AG04449 (cell line): ENCODE measurements at regions of chr1 and their contacts with region 1.

Region 1: GRCh38 chr1:176559878-176560277 is 96.9 kb downstream of the PAPPA2 start:
- DNase-seq: no peak
- H3K4me3 ChIP-seq: no peak overlapping the region
- CTCF ChIP-seq: peak; percentile 72

Region 2: DNA sequence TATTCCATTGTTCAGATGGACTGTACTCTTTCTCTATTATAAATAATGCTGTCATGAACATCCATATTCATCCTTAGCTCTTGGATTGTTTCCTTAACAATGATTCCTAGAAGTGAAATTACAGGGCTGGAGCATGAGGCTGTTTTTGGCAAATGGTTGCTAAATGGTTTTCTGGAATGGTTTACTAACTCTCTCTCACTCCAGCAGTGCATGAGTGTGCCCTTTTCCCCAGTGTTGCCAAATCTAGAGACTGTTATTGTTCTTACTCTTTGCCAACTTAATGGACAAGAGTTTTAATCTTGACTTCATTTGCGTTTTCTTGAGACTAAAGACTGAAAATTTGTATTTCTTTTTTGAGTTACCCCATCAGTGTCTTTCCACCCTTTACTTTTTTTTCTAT is 16.1 kb after region 1 on chr1:
- CTCF ChIA-PET with region 1: interaction called, 12 read pairs
- POLR2A ChIA-PET with region 1: no interaction called
- DNase-seq: no peak
- H3K4me3 ChIP-seq: no peak overlapping the region
- CTCF ChIP-seq: no peak

Region 3: DNA sequence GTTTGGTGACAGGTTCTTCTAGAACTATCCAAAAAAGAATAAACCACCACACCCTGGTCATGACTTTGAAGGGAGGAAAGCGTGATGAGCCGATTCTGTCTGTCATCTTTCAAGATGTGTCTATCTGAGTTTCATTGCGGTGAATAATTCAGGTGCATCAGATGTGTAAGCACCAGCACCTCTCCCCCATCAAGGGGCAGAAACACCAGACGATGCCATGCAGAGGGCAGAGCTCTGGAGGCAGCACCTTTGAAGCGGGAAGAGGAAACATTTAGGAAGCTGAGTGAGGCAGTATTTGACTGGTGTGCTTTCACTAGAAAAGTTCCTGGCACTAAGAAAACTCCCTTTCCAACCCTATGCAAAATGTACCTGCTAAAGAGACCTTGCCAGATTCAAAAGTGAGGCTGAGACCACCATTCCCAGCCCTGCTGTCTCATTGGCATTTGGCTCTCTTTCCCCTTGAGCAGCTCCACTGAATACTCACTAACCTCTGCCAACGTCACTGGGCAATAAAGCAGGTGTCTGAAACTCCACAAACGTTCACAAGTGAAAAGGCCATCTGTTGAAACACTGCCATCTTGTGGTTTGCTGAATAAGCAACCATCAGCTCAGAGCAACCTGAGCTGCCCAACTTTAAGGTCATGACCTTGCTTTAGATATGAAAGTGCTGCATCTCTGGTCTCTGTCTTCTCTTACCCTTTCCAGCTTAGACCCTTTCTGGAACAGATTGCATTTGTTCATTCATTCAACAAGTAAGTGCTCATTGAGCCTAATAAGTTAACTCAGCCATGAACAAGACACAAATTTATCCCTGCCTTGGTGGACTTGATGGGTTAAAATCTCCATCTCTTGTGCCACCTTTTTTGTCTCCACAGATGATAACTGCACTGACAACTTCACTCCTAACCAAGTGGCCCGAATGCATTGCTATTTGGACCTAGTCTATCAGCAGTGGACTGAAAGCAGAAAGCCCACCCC is 131.7 kb after region 1 on chr1:
- CTCF ChIA-PET with region 1: interaction called, 199 read pairs
- POLR2A ChIA-PET with region 1: no interaction called
- DNase-seq: peak; percentile 17
- H3K4me3 ChIP-seq: no peak overlapping the region
- CTCF ChIP-seq: peak; percentile 68

Region 4: GRCh38 chr1:176843352-176844297 is 283.7 kb after region 1 on chr1:
- CTCF ChIA-PET with region 1: interaction called, 38 read pairs
- POLR2A ChIA-PET with region 1: no interaction called
- DNase-seq: peak; percentile 26
- H3K4me3 ChIP-seq: no peak overlapping the region
- CTCF ChIP-seq: peak; percentile 39

Region 5: GRCh38 chr1:176880954-176881595 is 321.2 kb after region 1 on chr1:
- CTCF ChIA-PET with region 1: interaction called, 33 read pairs
- POLR2A ChIA-PET with region 1: no interaction called
- DNase-seq: no peak
- H3K4me3 ChIP-seq: no peak overlapping the region
- CTCF ChIP-seq: peak; percentile 80

Region 6: DNA sequence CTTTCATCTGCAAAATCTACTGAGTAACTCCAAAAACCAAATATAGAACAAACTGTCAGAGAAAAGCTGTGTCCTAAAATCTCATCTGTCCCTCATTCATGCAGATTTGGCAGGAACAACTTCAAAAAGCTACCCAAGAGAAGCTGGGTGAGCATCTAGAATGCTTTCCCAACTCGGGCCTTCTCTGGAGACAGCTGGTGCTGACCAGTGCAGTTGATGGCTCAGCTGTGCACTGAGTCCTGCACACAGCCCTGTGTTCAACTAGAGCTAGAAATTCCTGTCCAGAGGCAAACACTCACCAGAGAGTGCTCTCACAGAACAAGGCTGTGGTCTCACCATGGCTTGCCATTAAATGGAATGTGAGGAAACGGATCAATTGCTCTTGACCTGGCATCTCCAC is 401.8 kb after region 1 on chr1:
- CTCF ChIA-PET with region 1: no interaction called
- POLR2A ChIA-PET with region 1: no interaction called
- DNase-seq: no peak
- H3K4me3 ChIP-seq: no peak overlapping the region
- CTCF ChIP-seq: no peak